ENCODE measurements at regions of chr13 and their contacts with region 1.

Region 1: DNA sequence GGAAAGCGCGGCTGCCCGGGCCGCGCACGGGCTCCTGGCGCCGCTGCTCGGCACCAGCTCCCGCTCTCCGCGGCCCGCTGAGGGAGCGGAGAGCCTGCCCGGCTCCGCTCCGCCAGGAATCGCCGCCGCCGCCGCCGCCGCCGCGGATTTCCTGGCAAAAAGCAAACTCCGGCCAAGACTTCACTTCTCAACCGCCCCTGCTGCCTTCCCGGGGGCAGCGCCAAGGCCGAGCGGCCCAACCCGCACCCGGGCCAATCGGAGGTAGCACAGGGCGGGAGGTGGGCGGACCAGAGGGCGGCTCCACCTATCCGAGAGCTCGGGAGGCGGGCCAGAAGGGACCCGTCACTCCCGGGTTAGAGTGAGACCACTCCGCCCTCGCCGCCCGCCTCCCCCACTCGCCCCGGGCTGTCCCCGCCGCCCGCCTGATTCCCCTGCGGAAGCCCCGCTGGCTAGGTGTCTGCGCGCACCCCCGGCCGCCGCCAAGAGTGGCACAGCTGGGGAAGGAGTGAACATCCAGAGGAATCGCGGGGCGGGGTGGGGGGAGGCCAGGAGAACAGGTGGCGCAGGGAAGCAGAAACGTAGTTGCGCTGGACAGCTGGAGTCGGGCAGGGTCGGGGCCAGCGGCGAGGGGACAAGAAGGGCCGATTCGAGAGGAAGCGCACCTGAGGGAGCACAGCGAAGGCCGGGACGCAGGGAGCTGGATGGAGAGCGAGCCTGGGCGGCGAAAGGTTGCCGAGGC is at the start of gene LNX2:
- DNase-seq: peak; percentile 95
- H3K4me3 ChIP-seq: peak within 1 kb of the TSS; percentile 66 to 95
- H3K4me3 Mint-ChIP-seq: peak within 1 kb of the TSS; percentile 90 to 97 (median 96)
- H3K27ac ChIP-seq: peak within 1 kb of the TSS; percentile 90
- H3K27ac Mint-ChIP-seq: peak within 1 kb of the TSS; percentile 95 to 98 (median 97)
- H3K4me1 ChIP-seq: peaks cover 60% of the 10 kb centered on the region
- H3K4me1 Mint-ChIP-seq: peaks cover 42 to 74% (median 59%) of the 10 kb centered on the region in 4 donors
- H3K27me3 ChIP-seq: no peaks in the 10 kb centered on the region
- H3K27me3 Mint-ChIP-seq: no peaks in the 10 kb centered on the region
- total RNA-seq, gene LNX2: 11.8 to 13.0 TPM

Region 2: DNA sequence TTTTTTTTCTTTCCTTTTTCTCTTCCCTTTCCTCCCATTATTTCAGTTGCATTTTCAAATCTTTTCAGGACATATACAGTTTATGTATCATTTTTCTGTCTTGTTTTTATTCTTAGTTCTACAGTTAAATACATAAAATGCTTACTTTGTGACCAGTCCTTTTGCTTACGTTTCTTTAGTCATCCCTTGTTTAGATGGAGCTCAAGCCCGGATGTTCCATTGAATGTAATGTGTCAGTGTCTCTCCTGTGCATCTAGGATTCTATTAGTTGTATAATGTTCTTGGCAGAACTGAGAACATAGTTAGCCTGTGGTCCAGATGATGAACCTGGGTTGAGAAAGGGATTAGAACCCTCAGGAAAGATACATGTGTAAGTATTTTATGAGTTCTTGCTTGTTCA is 1045.3 kb before region 1 on chr13:
- CTCF ChIA-PET with region 1: no interaction called
- POLR2A ChIA-PET with region 1: no interaction called
- intact Hi-C with region 1: no loop called
- DNase-seq: no peak
- H3K4me3 ChIP-seq: no peak overlapping the region
- H3K4me3 Mint-ChIP-seq: no peak overlapping the region
- H3K27ac ChIP-seq: no peak overlapping the region
- H3K27ac Mint-ChIP-seq: peak overlapping the region in 1 of 7 donors; percentile 31
- H3K4me1 ChIP-seq: no peaks in the 10 kb centered on the region
- H3K4me1 Mint-ChIP-seq: no peaks in the 10 kb centered on the region
- H3K27me3 ChIP-seq: no peaks in the 10 kb centered on the region
- H3K27me3 Mint-ChIP-seq: peaks cover 3% of the 10 kb centered on the region in 2 donors

Region 3: GRCh38 chr13:27171827-27172494 is 448.6 kb before region 1 on chr13:
- CTCF ChIA-PET with region 1: no interaction called
- POLR2A ChIA-PET with region 1: interaction called, 8 read pairs
- intact Hi-C with region 1: loop called (anchors 2 kb)
- DNase-seq: peak; percentile 92 to 94 (median 93)
- H3K4me3 ChIP-seq: peak overlapping the region; percentile 15 to 63
- H3K4me3 Mint-ChIP-seq: peak overlapping the region; percentile 82 to 96 (median 90)
- H3K27ac ChIP-seq: peak overlapping the region; percentile 95
- H3K27ac Mint-ChIP-seq: peak overlapping the region; percentile 84 to 99 (median 96)
- H3K4me1 ChIP-seq: peaks cover 37% of the 10 kb centered on the region
- H3K4me1 Mint-ChIP-seq: peaks cover 31 to 46% (median 39%) of the 10 kb centered on the region in 4 donors
- H3K27me3 ChIP-seq: no peaks in the 10 kb centered on the region
- H3K27me3 Mint-ChIP-seq: no peaks in the 10 kb centered on the region

Region 4: DNA sequence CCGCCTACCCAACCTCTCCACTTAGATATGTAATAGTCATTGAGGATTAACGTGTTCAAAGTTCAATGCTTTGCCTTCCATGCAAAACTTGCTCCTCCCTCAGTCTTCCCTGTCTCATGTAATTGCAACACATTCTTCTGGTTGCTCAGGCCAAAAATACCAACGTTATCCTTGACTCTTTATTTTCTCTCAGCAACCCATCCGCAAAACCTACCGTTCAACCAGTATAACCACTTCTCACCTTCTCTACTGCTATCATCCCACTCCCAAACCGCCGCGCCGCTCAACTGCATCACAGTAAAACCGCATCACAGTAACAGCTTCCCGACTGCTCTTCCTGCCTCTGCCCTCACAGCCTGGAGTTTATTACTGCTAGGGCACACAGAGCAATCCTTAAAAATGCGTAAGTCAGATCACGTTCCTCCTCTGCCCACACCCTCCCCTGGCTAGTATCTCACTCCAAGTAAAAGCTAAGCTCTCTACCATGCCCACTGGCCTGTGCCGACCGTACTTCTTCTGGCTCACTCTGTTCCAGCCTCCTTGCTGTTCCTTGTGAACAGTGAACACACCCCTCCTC is 178.4 kb before region 1 on chr13:
- CTCF ChIA-PET with region 1: interaction called, 4 read pairs
- POLR2A ChIA-PET with region 1: interaction called, 31 read pairs
- intact Hi-C with region 1: no loop called
- DNase-seq: peak; percentile 32 to 63 (median 39)
- H3K4me3 ChIP-seq: peak overlapping the region in 1 of 2 donors; percentile 43
- H3K4me3 Mint-ChIP-seq: peak overlapping the region; percentile 53 to 85 (median 73)
- H3K27ac ChIP-seq: peak overlapping the region; percentile 19
- H3K27ac Mint-ChIP-seq: peak overlapping the region; percentile 76 to 93 (median 90)
- H3K4me1 ChIP-seq: peaks cover 67% of the 10 kb centered on the region
- H3K4me1 Mint-ChIP-seq: peaks cover 40 to 80% (median 59%) of the 10 kb centered on the region in 4 donors
- H3K27me3 ChIP-seq: no peaks in the 10 kb centered on the region
- H3K27me3 Mint-ChIP-seq: no peaks in the 10 kb centered on the region

Region 5: DNA sequence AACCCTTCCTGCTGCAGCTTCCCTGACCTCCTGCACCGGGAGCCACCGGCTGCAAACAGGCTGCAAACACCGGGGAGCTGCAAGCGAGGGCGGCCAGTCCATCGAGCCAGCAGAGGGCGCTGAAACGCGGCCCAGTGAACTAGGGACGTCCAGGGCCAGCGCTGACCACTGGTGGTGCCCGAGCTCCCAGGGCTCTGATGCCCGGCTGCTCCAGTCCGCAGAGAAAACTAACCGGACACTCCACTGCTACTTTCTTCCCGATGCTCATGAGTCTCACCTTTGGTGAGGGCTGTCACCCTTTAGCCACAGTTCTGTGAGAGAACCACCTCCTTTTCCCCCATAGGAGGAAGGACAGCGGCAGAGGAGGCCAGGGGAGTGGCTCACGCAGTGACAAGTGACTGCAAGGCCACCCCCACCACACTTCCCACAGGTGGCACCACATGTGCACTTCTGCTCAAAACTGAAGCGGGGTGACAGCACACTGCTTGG is 87.3 kb before region 1 on chr13:
- CTCF ChIA-PET with region 1: interaction called, 12 read pairs
- POLR2A ChIA-PET with region 1: interaction called, 3 read pairs
- intact Hi-C with region 1: loop called (anchors 1 kb)
- DNase-seq: peak; percentile 21 to 53 (median 33)
- H3K4me3 ChIP-seq: no peak overlapping the region
- H3K4me3 Mint-ChIP-seq: peak overlapping the region in 3 of 8 donors; percentile 21 to 57 (median 41)
- H3K27ac ChIP-seq: no peak overlapping the region
- H3K27ac Mint-ChIP-seq: no peak overlapping the region
- H3K4me1 ChIP-seq: peaks cover 8% of the 10 kb centered on the region
- H3K4me1 Mint-ChIP-seq: peaks cover 6 to 12% (median 8%) of the 10 kb centered on the region in 4 donors
- H3K27me3 ChIP-seq: no peaks in the 10 kb centered on the region
- H3K27me3 Mint-ChIP-seq: peaks cover 0 to 1% of the 10 kb centered on the region in 2 donors

Region 6: GRCh38 chr13:27565818-27566217 is 54.7 kb before region 1 on chr13:
- CTCF ChIA-PET with region 1: no interaction called
- POLR2A ChIA-PET with region 1: interaction called, 20 read pairs
- intact Hi-C with region 1: loop called (anchors 5 kb)
- DNase-seq: no peak
- H3K4me3 ChIP-seq: no peak overlapping the region
- H3K4me3 Mint-ChIP-seq: no peak overlapping the region
- H3K27ac ChIP-seq: no peak overlapping the region
- H3K27ac Mint-ChIP-seq: no peak overlapping the region
- H3K4me1 ChIP-seq: peaks cover 18% of the 10 kb centered on the region
- H3K4me1 Mint-ChIP-seq: peaks cover 9 to 16% (median 12%) of the 10 kb centered on the region in 4 donors
- H3K27me3 ChIP-seq: no peaks in the 10 kb centered on the region
- H3K27me3 Mint-ChIP-seq: no peaks in the 10 kb centered on the region

Region 7: DNA sequence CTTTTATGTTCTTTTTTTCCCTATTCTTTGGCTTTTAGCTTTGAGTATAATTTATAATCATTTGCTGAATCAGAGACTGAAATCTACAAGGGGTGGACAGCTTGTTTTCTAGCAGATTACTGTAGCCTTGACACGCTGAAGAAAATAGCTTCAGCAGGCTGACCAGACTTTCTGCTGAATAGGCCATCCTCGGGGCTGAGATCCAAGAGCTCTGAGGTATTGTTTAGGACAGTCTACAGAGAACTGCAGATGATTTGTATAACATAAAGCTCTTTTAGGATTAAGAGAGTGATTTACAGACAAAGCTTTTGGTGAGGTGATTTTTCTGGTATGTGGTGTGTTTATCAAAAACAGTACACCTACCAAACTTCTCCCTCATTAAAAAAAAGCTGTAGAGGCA is 18.0 kb after region 1 on chr13:
- CTCF ChIA-PET with region 1: interaction called, 3 read pairs
- POLR2A ChIA-PET with region 1: interaction called, 10 read pairs
- intact Hi-C with region 1: no loop called
- DNase-seq: no peak
- H3K4me3 ChIP-seq: no peak overlapping the region
- H3K4me3 Mint-ChIP-seq: no peak overlapping the region
- H3K27ac ChIP-seq: no peak overlapping the region
- H3K27ac Mint-ChIP-seq: peak overlapping the region in 1 of 7 donors; percentile 27
- H3K4me1 ChIP-seq: peaks cover 16% of the 10 kb centered on the region
- H3K4me1 Mint-ChIP-seq: peaks cover 45 to 58% (median 53%) of the 10 kb centered on the region in 4 donors
- H3K27me3 ChIP-seq: no peaks in the 10 kb centered on the region
- H3K27me3 Mint-ChIP-seq: no peaks in the 10 kb centered on the region

Measured in CD4-positive, alpha-beta memory T cell (primary cell).